Esophagus muscularis mucosa (tissue), 4 donors: ENCODE measurements at regions of chr9 and their contacts with region 1.

Region 1: GRCh38 chr9:106862825-106863720 is at the start of gene ZNF462:
- DNase-seq: no peak
- H3K4me3 ChIP-seq: peak within 1 kb of the TSS; percentile 78 to 83 (median 80)
- H3K27ac ChIP-seq: peak within 1 kb of the TSS; percentile 85 to 89 (median 88)
- H3K4me1 ChIP-seq: peaks cover 20 to 47% (median 39%) of the 10 kb centered on the region in 4 donors
- H3K27me3 ChIP-seq: no peaks in the 10 kb centered on the region
- CTCF ChIP-seq: peak; percentile 46 to 91 (median 74)
- EP300 ChIP-seq: no peak
- POLR2A ChIP-seq: no peak
- total RNA-seq, gene ZNF462: 24.5 to 38.6 (median 34.6) TPM

Region 2: DNA sequence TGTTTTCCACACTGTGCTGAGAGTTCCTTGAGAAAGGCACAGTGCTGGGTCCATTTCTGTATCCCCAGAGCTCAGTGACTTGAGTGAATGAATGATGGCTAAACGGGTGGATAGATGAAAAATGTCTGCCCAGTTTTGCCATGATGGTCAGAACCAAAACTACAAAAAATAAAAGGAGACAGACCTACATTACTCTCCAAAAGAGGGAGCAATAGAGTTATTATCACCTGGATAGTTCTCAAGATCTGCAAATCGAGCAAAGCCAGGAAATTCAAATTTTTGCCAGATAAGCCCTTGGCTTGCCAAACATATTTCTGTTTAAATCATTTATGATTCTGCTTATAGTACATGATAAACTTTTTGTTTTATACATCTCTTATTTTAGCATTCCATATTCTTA is 214.3 kb before region 1 on chr9:
- intact Hi-C with region 1: loop called (anchors 2 kb)
- DNase-seq: no peak
- H3K4me3 ChIP-seq: no peak overlapping the region
- H3K27ac ChIP-seq: no peak overlapping the region
- H3K4me1 ChIP-seq: peaks cover 0 to 3% (median 0%) of the 10 kb centered on the region in 4 donors
- H3K27me3 ChIP-seq: no peaks in the 10 kb centered on the region
- CTCF ChIP-seq: peak; percentile 29 to 48 (median 42)
- EP300 ChIP-seq: no peak
- POLR2A ChIP-seq: no peak

Region 3: DNA sequence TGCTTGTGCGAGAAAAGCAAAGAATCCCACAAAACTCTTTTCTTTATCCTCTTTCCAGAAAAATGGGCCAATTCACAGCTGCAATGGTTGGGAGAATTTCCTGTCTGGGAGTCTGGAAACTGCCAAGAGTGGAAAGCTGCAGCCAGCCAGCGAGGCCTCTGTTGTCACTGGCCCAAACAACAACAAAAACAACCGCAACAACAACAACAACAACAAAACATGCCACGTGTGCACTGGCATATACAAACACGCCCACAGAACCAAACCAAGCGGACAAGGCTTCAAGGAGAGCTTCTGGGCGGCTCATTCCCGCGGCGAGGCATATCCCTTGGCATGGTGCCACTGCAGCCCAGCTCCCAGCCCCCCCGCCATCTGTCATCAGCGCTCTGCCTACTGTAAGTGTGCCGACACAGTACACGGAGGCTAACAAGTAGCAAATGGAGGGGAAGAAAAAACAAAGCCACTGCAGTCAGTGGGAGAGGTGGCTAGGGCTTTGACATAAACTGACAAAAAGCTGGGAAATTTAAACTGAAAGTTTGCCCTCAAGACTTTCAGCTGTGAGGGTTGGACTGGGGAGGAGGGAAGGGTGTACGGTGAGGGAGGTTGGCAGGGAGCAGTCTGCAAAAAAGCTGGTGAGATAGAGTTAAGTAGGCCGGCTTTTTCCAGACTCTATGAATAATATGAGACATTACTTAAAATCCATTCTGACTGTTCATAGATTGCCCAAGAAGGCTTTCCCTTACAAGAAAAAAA is 165.1 kb before region 1 on chr9:
- intact Hi-C with region 1: loop called (anchors 2 kb)
- DNase-seq: no peak
- H3K4me3 ChIP-seq: peak overlapping the region; percentile 46 to 56 (median 48)
- H3K27ac ChIP-seq: peak overlapping the region; percentile 74 to 77 (median 75)
- H3K4me1 ChIP-seq: peaks cover 19 to 29% (median 21%) of the 10 kb centered on the region in 4 donors
- H3K27me3 ChIP-seq: no peaks in the 10 kb centered on the region
- CTCF ChIP-seq: no peak
- EP300 ChIP-seq: no peak
- POLR2A ChIP-seq: no peak

Region 4: GRCh38 chr9:106745457-106745856 is 117.6 kb before region 1 on chr9:
- intact Hi-C with region 1: no loop called
- DNase-seq: no peak
- H3K4me3 ChIP-seq: no peak overlapping the region
- H3K27ac ChIP-seq: no peak overlapping the region
- H3K4me1 ChIP-seq: peaks cover 0 to 14% (median 7%) of the 10 kb centered on the region in 4 donors
- H3K27me3 ChIP-seq: no peaks in the 10 kb centered on the region
- CTCF ChIP-seq: no peak
- EP300 ChIP-seq: no peak
- POLR2A ChIP-seq: no peak

Region 5: DNA sequence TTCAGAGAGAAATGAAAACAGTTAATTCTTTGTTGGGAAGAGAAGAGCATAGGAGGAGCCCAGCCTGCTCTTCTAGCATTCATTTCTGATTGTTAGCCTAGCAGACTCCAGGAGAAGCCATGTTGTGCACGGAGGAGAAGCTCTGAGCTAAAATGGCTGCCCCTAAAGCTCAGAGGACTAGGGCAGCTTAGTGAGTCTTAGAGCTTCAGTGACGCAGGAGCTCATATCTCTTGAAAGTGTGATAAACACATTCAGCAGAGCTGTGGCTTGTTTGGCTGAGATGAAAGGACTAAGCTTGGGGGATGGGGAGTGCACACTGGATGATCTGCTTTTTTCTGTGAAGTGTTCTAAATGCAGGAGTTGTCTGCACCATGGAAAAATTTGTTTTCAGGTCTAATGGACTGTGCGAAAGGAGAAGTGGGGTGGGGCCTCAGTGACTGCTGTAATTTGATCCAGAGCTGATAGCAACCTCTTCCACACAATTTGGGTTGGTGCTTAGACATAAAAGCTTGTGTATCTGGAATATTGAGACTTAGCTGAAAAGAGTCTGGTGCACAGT is 58.3 kb after region 1 on chr9:
- intact Hi-C with region 1: no loop called
- DNase-seq: no peak
- H3K4me3 ChIP-seq: peak overlapping the region in 1 of 4 donors; percentile 20
- H3K27ac ChIP-seq: peak overlapping the region; percentile 65 to 71 (median 70)
- H3K4me1 ChIP-seq: peaks cover 48 to 63% (median 54%) of the 10 kb centered on the region in 4 donors
- H3K27me3 ChIP-seq: no peaks in the 10 kb centered on the region
- CTCF ChIP-seq: no peak
- EP300 ChIP-seq: no peak
- POLR2A ChIP-seq: no peak

Region 6: GRCh38 chr9:106953166-106953565 is 90.1 kb after region 1 on chr9:
- intact Hi-C with region 1: loop called (anchors 10 kb)
- DNase-seq: no peak
- H3K4me3 ChIP-seq: no peak overlapping the region
- H3K27ac ChIP-seq: no peak overlapping the region
- H3K4me1 ChIP-seq: peaks cover 9 to 19% (median 16%) of the 10 kb centered on the region in 4 donors
- H3K27me3 ChIP-seq: no peaks in the 10 kb centered on the region
- CTCF ChIP-seq: no peak
- EP300 ChIP-seq: no peak
- POLR2A ChIP-seq: no peak

Region 7: GRCh38 chr9:107020040-107020530 is 157.0 kb after region 1 on chr9:
- intact Hi-C with region 1: loop called (anchors 10 kb)
- DNase-seq: peak; percentile 88
- H3K4me3 ChIP-seq: no peak overlapping the region
- H3K27ac ChIP-seq: peak overlapping the region; percentile 60 to 71 (median 68)
- H3K4me1 ChIP-seq: peaks cover 12 to 32% (median 27%) of the 10 kb centered on the region in 4 donors
- H3K27me3 ChIP-seq: no peaks in the 10 kb centered on the region
- CTCF ChIP-seq: no peak
- EP300 ChIP-seq: no peak
- POLR2A ChIP-seq: no peak

Region 8: GRCh38 chr9:107060062-107060461 is 197.0 kb after region 1 on chr9:
- intact Hi-C with region 1: no loop called
- DNase-seq: no peak
- H3K4me3 ChIP-seq: no peak overlapping the region
- H3K27ac ChIP-seq: no peak overlapping the region
- H3K4me1 ChIP-seq: no peaks in the 10 kb centered on the region
- H3K27me3 ChIP-seq: no peaks in the 10 kb centered on the region
- CTCF ChIP-seq: no peak
- EP300 ChIP-seq: no peak
- POLR2A ChIP-seq: no peak

Region 9: DNA sequence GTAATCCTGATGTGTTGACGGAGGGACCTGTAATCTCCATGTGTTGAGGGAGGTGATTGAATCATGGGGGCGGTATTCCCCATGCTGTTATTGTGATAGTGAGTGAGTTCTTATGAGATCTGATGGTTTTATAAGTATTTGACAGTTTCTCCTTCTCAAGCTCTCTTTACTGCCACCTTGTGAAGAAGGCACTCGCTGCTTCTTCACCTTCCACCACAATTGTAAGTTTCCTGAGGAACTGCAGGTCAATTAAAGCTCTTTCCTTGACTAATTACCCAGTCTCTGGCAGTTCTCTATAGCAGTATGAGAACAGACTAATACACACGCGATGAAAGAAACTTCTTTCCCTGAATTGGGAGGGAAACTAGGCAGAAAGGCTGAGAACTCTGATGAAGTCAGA is 278.9 kb after region 1 on chr9:
- intact Hi-C with region 1: loop called (anchors 10 kb)
- DNase-seq: no peak
- H3K4me3 ChIP-seq: no peak overlapping the region
- H3K27ac ChIP-seq: no peak overlapping the region
- H3K4me1 ChIP-seq: peaks cover 10 to 16% (median 14%) of the 10 kb centered on the region in 4 donors
- H3K27me3 ChIP-seq: no peaks in the 10 kb centered on the region
- CTCF ChIP-seq: no peak
- EP300 ChIP-seq: no peak
- POLR2A ChIP-seq: no peak